CD4-positive, alpha-beta memory T cell (primary cell): ENCODE measurements at regions of chr3 and their contacts with region 1.

Region 1: GRCh38 chr3:30693470-30694120 is 87.2 kb downstream of the TGFBR2 start:
- DNase-seq: peak; percentile 60 to 70 (median 67)
- H3K4me3 ChIP-seq: no peak overlapping the region
- H3K4me3 Mint-ChIP-seq: no peak overlapping the region
- H3K27ac ChIP-seq: no peak overlapping the region
- H3K27ac Mint-ChIP-seq: peak overlapping the region; percentile 17 to 86 (median 47)
- H3K4me1 ChIP-seq: peaks cover 26% of the 10 kb centered on the region
- H3K4me1 Mint-ChIP-seq: peaks cover 34 to 46% (median 38%) of the 10 kb centered on the region in 4 donors
- H3K27me3 ChIP-seq: no peaks in the 10 kb centered on the region
- H3K27me3 Mint-ChIP-seq: no peaks in the 10 kb centered on the region

Region 2: GRCh38 chr3:30112902-30113484 is 580.6 kb before region 1 on chr3:
- CTCF ChIA-PET with region 1: interaction called, 29 read pairs
- POLR2A ChIA-PET with region 1: no interaction called
- intact Hi-C with region 1: loop called (anchors 1 kb)
- DNase-seq: peak in 4 of 5 donors; percentile 29 to 37 (median 34)
- H3K4me3 ChIP-seq: no peak overlapping the region
- H3K4me3 Mint-ChIP-seq: no peak overlapping the region
- H3K27ac ChIP-seq: no peak overlapping the region
- H3K27ac Mint-ChIP-seq: no peak overlapping the region
- H3K4me1 ChIP-seq: no peaks in the 10 kb centered on the region
- H3K4me1 Mint-ChIP-seq: no peaks in the 10 kb centered on the region
- H3K27me3 ChIP-seq: no peaks in the 10 kb centered on the region
- H3K27me3 Mint-ChIP-seq: peaks cover 2 to 5% of the 10 kb centered on the region in 2 donors

Region 3: DNA sequence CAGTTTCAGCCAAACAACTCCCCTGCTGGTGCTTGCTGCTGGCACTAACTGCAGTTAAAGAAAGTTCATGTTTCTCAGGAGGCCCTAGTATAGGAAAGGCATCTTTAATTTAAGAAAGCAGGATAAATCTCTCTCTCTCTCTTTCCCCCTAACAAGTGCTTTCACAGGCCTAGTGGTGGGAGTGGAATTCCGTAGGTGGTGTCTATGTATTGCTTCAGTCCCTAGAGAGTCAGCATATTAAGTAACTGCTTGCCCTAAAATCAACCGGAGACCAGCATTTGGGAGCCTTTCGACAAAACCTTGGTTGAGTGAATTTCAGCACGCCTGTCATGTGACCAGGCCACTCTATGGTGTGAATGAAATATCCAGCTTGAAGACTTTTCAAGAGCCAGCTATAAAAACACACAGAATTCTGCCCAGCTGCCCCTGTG is 256.4 kb before region 1 on chr3:
- CTCF ChIA-PET with region 1: interaction called, 6 read pairs
- POLR2A ChIA-PET with region 1: interaction called, 5 read pairs
- intact Hi-C with region 1: loop called (anchors 5 kb)
- DNase-seq: no peak
- H3K4me3 ChIP-seq: no peak overlapping the region
- H3K4me3 Mint-ChIP-seq: no peak overlapping the region
- H3K27ac ChIP-seq: no peak overlapping the region
- H3K27ac Mint-ChIP-seq: no peak overlapping the region
- H3K4me1 ChIP-seq: peaks cover 16% of the 10 kb centered on the region
- H3K4me1 Mint-ChIP-seq: peaks cover 12 to 26% (median 17%) of the 10 kb centered on the region in 4 donors
- H3K27me3 ChIP-seq: no peaks in the 10 kb centered on the region
- H3K27me3 Mint-ChIP-seq: no peaks in the 10 kb centered on the region

Region 4: GRCh38 chr3:30628901-30629590 is 64.5 kb before region 1 on chr3:
- CTCF ChIA-PET with region 1: interaction called, 21 read pairs
- POLR2A ChIA-PET with region 1: interaction called, 5 read pairs
- intact Hi-C with region 1: loop called (anchors 1 kb)
- DNase-seq: peak in 4 of 5 donors; percentile 38 to 54 (median 44)
- H3K4me3 ChIP-seq: no peak overlapping the region
- H3K4me3 Mint-ChIP-seq: peak overlapping the region in 7 of 8 donors; percentile 55 to 82 (median 64)
- H3K27ac ChIP-seq: peak overlapping the region; percentile 60
- H3K27ac Mint-ChIP-seq: peak overlapping the region; percentile 89 to 97 (median 94)
- H3K4me1 ChIP-seq: peaks cover 99% of the 10 kb centered on the region
- H3K4me1 Mint-ChIP-seq: peaks cover 71 to 98% (median 84%) of the 10 kb centered on the region in 4 donors
- H3K27me3 ChIP-seq: no peaks in the 10 kb centered on the region
- H3K27me3 Mint-ChIP-seq: no peaks in the 10 kb centered on the region

Region 5: GRCh38 chr3:30667280-30667651 is 26.3 kb before region 1 on chr3:
- CTCF ChIA-PET with region 1: interaction called, 13 read pairs
- POLR2A ChIA-PET with region 1: interaction called, 7 read pairs
- intact Hi-C with region 1: no loop called
- DNase-seq: peak; percentile 36 to 57 (median 45)
- H3K4me3 ChIP-seq: no peak overlapping the region
- H3K4me3 Mint-ChIP-seq: peak overlapping the region in 6 of 8 donors; percentile 8 to 79 (median 48)
- H3K27ac ChIP-seq: peak overlapping the region; percentile 42
- H3K27ac Mint-ChIP-seq: peak overlapping the region; percentile 63 to 87 (median 83)
- H3K4me1 ChIP-seq: peaks cover 94% of the 10 kb centered on the region
- H3K4me1 Mint-ChIP-seq: peaks cover 73 to 97% (median 87%) of the 10 kb centered on the region in 4 donors
- H3K27me3 ChIP-seq: no peaks in the 10 kb centered on the region
- H3K27me3 Mint-ChIP-seq: no peaks in the 10 kb centered on the region

Region 6: DNA sequence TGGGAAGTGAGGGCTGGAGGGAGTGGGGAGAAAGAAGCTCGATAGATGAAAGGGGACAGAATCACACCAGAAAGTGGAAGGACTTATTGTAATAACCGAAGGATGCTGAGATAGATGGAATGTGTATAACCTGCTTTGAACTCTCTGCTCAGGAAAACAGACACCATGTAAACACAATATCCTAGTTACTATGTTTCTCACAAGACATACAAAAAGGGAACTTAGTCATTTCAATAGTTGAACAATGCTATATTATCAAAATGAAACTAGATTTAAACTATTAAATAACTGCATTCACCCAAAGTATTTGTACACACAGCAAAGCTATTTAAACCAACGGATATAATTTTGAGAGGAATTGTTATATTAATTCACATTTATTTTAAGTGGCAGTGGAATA is 309.1 kb after region 1 on chr3:
- CTCF ChIA-PET with region 1: no interaction called
- POLR2A ChIA-PET with region 1: no interaction called
- intact Hi-C with region 1: no loop called
- DNase-seq: no peak
- H3K4me3 ChIP-seq: no peak overlapping the region
- H3K4me3 Mint-ChIP-seq: no peak overlapping the region
- H3K27ac ChIP-seq: no peak overlapping the region
- H3K27ac Mint-ChIP-seq: peak overlapping the region in 1 of 7 donors; percentile 45
- H3K4me1 ChIP-seq: no peaks in the 10 kb centered on the region
- H3K4me1 Mint-ChIP-seq: peaks cover 0 to 5% (median 5%) of the 10 kb centered on the region in 4 donors
- H3K27me3 ChIP-seq: no peaks in the 10 kb centered on the region
- H3K27me3 Mint-ChIP-seq: peaks cover 0 to 2% of the 10 kb centered on the region in 2 donors